Sigmoid colon (tissue), 7 donors: ENCODE measurements at regions of chr10 and their contacts with region 1.

Region 1: DNA sequence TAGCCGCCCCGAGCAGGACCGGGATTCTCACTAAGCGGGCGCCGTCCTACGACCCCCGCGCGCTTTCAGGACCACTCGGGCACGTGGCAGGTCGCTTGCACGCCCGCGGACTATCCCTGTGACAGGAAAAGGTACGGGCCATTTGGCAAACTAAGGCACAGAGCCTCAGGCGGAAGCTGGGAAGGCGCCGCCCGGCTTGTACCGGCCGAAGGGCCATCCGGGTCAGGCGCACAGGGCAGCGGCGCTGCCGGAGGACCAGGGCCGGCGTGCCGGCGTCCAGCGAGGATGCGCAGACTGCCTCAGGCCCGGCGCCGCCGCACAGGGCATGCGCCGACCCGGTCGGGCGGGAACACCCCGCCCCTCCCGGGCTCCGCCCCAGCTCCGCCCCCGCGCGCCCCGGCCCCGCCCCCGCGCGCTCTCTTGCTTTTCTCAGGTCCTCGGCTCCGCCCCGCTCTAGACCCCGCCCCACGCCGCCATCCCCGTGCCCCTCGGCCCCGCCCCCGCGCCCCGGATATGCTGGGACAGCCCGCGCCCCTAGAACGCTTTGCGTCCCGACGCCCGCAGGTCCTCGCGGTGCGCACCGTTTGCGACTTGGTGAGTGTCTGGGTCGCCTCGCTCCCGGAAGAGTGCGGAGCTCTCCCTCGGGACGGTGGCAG is at the start of gene MGMT:
- DNase-seq: peak; percentile 97
- H3K4me3 ChIP-seq: peak within 1 kb of the TSS; percentile 54 to 86 (median 75)
- H3K27ac ChIP-seq: peak within 1 kb of the TSS; percentile 81 to 90 (median 86)
- H3K4me1 ChIP-seq: peaks cover 0 to 20% (median 12%) of the 10 kb centered on the region in 4 donors
- H3K27me3 ChIP-seq: no peaks in the 10 kb centered on the region
- CTCF ChIP-seq: no peak
- EP300 ChIP-seq: no peak
- POLR2A ChIP-seq: peak; percentile 33 to 52
- total RNA-seq, gene MGMT: 24.3 to 40.3 (median 29.9) TPM

Region 2: GRCh38 chr10:129030996-129031843 is 435.6 kb before region 1 on chr10:
- intact Hi-C with region 1: loop called (anchors 2 kb)
- DNase-seq: no peak
- H3K4me3 ChIP-seq: no peak overlapping the region
- H3K27ac ChIP-seq: no peak overlapping the region
- H3K4me1 ChIP-seq: peaks cover 0 to 11% (median 6%) of the 10 kb centered on the region in 4 donors
- H3K27me3 ChIP-seq: peaks cover 0 to 79% (median 43%) of the 10 kb centered on the region in 3 donors
- CTCF ChIP-seq: peak; percentile 75 to 92 (median 79)
- EP300 ChIP-seq: no peak
- POLR2A ChIP-seq: no peak

Region 3: GRCh38 chr10:129096065-129096984 is 370.5 kb before region 1 on chr10:
- intact Hi-C with region 1: loop called (anchors 5 kb)
- DNase-seq: peak; percentile 77
- H3K4me3 ChIP-seq: peak overlapping the region in 1 of 4 donors; percentile 6
- H3K27ac ChIP-seq: peak overlapping the region; percentile 41 to 75 (median 67)
- H3K4me1 ChIP-seq: peaks cover 0 to 33% (median 27%) of the 10 kb centered on the region in 4 donors
- H3K27me3 ChIP-seq: no peaks in the 10 kb centered on the region
- CTCF ChIP-seq: no peak
- EP300 ChIP-seq: peak in 3 of 4 donors; percentile 64 to 77 (median 70)
- POLR2A ChIP-seq: no peak

Region 4: GRCh38 chr10:129310881-129311280 is 155.9 kb before region 1 on chr10:
- intact Hi-C with region 1: no loop called
- DNase-seq: no peak
- H3K4me3 ChIP-seq: no peak overlapping the region
- H3K27ac ChIP-seq: no peak overlapping the region
- H3K4me1 ChIP-seq: no peaks in the 10 kb centered on the region
- H3K27me3 ChIP-seq: no peaks in the 10 kb centered on the region
- CTCF ChIP-seq: no peak
- EP300 ChIP-seq: no peak
- POLR2A ChIP-seq: no peak

Region 5: GRCh38 chr10:129361676-129362376 is 105.0 kb before region 1 on chr10:
- intact Hi-C with region 1: no loop called
- DNase-seq: no peak
- H3K4me3 ChIP-seq: no peak overlapping the region
- H3K27ac ChIP-seq: no peak overlapping the region
- H3K4me1 ChIP-seq: no peaks in the 10 kb centered on the region
- H3K27me3 ChIP-seq: no peaks in the 10 kb centered on the region
- CTCF ChIP-seq: no peak
- EP300 ChIP-seq: no peak
- POLR2A ChIP-seq: no peak

Region 6: GRCh38 chr10:129963641-129964501 is 497.0 kb after region 1 on chr10 and contains the start of gene EBF3:
- intact Hi-C with region 1: loop called (anchors 5 kb)
- DNase-seq: peak; percentile 84
- H3K4me3 ChIP-seq: peak within 1 kb of the TSS; percentile 29 to 60 (median 50)
- H3K27ac ChIP-seq: peak within 1 kb of the TSS; percentile 54 to 78 (median 68)
- H3K4me1 ChIP-seq: peaks cover 0 to 65% (median 56%) of the 10 kb centered on the region in 4 donors
- H3K27me3 ChIP-seq: peaks cover 74 to 98% (median 87%) of the 10 kb centered on the region in 3 donors
- CTCF ChIP-seq: no peak
- EP300 ChIP-seq: no peak
- POLR2A ChIP-seq: no peak
- total RNA-seq, gene EBF3: 4.3 to 8.9 (median 5.8) TPM

Region 7: GRCh38 chr10:130110246-130111112 is 643.6 kb after region 1 on chr10 and contains the start of gene C10orf143:
- intact Hi-C with region 1: loop called (anchors 5 kb)
- DNase-seq: peak; percentile 99
- H3K4me3 ChIP-seq: peak within 1 kb of the TSS; percentile 68 to 84 (median 76)
- H3K27ac ChIP-seq: peak within 1 kb of the TSS; percentile 88 to 99 (median 96)
- H3K4me1 ChIP-seq: peaks cover 0 to 28% (median 24%) of the 10 kb centered on the region in 4 donors
- H3K27me3 ChIP-seq: no peaks in the 10 kb centered on the region
- CTCF ChIP-seq: no peak
- EP300 ChIP-seq: no peak
- POLR2A ChIP-seq: peak; percentile 70 to 78
- total RNA-seq, gene C10orf143: 1.4 to 8.7 (median 4.7) TPM